ENCODE measurements at regions of chr20 and their contacts with region 1.

Region 1: DNA sequence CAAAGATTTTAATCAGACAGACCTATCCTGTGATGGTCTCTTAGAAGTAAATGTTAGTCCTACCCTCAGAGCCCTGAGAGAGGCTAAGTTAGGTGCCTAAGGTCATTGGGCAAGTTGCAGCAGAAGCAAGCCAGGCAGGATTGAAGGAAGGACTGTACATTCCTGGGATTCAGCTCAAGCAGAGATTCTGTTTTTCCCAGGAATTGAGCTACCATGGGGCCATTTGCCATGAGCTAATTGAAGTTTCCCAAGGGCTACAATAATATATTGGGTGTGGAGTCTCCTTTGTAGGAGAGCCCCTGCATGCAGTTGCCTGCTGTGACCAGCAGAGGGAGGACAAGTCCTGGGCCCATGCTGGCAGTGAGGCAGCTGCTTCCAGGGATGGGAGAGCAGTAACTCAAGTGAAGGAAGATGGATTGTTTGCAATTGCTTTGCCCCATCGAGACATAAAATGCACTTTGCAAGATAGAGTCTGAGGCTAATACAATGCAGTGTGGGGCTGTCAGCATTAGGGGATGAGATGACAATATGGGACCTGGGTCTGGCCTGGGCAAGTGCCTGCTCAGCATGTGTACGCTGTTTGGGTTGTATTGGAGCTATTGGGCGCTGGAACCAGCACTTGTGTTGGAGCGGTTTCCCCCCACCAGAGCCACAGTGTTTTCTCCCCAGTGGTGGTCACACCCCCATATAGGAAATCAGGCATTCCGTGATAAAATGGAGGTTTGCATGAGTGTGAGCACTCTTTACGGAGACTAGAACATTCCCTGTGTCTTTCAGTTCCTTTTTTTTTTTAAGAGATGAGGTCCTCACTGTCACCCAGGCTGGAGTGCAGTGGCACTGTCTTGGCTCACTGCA is 27.9 kb downstream of the DNMT3B start:
- DNase-seq: peak; percentile 78
- ATAC-seq: peak; percentile 81 to 85

Region 2: GRCh38 chr20:32718731-32719348 is 71.3 kb before region 1 on chr20:
- intact Hi-C with region 1: no loop called
- DNase-seq: no peak
- ATAC-seq: no peak

Region 3: DNA sequence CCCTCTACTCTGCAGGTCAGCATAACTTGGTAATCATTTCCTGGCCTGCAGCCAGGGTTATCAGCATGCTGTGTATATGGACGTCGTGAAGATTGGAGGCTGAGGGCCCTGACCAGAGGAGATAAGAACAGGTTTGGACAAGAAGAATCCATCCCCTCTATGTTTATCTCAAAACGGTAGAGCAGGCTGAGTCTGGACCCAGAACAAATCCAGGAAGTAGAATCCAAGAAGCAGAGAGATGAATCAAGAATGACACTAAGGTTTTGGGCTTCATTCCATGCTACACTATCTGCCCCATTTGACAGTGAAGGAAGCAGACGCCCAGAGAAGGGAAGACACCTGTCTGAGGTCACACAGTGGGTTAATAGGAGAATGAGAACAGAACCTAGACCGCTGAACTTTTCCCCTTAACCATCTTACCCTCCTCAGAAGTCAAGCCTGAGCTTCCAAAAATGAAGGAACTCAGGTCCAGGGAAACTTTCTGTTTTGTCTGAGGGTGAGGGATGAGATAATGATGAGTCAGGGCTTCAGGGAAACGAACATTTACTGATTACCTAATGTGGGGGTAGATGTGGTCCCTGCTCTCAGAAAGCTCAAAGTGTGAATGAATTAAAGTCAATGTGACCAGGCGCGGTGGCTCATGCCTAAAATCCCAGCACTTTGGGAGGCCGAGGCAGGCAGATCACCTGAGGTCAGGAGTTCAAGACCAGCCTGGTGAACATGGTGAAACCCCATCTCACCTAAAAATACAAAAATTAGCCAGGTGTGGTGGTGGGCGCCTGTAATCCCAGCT is 37.5 kb before region 1 on chr20:
- intact Hi-C with region 1: no loop called
- DNase-seq: no peak
- ATAC-seq: peak in 1 of 2 donors; percentile 88

Region 4: GRCh38 chr20:32877507-32877906 is 87.4 kb after region 1 on chr20:
- intact Hi-C with region 1: loop called in 1 of 2 experiments (anchors 5 kb)
- DNase-seq: no peak
- ATAC-seq: no peak

Region 5: DNA sequence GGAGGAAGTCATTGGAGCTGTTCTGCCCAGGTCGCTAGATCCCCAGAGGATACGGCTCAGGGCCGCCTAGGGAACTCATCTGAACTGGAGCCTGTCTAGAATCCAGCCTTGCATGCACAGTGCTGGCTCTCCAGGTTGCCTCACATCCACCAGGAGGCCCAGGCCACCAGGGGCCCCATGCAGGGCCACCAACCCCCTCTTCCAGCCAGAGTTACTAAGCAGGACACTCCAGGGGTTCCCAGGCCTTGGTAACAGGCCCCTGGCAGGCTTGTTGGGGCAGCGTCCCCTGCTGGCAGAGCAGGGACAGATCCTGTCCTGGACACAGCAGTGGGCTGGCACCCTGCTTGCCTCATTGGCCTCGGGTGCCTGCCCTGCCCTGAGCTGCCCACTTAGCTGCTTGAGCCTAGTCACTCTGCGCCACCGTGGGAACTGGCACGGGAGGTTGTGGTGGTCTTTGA is 103.9 kb after region 1 on chr20:
- intact Hi-C with region 1: loop called in 1 of 2 experiments (anchors 5 kb)
- DNase-seq: no peak
- ATAC-seq: peak; percentile 39 to 50

Region 6: DNA sequence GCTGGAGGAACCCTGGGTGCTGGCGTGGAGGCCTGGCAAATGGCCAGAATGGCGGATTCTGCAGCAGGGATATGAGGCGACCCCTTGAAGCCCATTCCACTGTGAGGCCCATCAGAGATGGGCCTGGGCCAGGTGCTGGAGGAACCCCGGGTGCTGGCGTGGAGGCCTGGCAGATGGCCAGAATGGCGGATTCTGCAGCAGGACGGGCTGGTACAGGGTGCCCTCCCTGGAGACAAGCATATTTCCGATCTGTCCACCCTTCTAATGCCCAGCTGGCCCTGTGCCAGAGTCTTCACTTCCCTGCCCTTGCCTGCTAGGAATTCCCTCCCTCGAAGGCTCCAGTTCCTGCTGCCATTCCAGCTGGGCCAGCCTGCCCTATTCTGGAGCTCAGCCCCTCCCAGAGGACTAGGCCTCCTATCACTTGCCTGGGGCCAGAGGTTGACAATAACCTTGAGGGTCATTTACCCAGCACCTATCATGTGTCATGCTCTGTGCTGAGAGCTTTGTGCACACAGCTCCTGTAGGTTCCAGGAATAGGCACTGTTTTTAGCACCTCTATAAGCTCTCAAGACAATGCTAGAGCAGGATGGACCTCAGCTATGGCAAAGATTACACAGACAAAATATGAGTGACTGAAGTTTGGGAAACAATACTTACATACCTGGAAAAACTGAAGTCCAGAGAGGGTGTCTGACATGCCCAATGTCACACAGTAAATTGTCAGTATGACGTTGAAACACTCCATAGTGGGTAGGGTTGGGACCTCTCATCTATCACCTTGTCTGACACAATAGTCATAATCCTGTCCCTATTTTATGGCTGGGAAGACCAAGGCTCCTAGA is 192.7 kb after region 1 on chr20:
- intact Hi-C with region 1: no loop called
- DNase-seq: peak; percentile 58
- ATAC-seq: peak; percentile 46 to 71

Region 7: DNA sequence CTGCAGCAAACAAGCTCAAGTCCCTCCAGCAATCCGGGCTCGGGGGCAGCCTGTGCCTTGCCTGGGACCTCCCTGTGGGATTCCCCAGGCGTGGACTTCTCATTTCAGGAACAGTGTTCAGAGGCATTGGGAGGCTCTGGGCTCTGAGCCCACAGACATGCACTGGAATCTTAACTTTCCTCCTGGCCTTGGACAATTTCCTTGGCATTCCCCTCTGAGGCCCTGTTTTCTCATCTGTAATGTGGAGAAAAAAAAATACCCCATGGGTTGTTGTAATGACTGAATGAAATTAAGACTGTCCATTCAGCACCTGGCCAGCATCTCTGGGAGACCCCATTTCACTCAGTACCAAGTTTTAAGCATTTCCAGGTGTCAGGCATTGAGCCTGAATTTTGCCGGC is 306.9 kb after region 1 on chr20:
- intact Hi-C with region 1: loop called (anchors 5 to 10 kb)
- DNase-seq: no peak
- ATAC-seq: peak in 1 of 2 donors; percentile 73

Region 8: GRCh38 chr20:33299111-33299603 is 509.0 kb after region 1 on chr20:
- intact Hi-C with region 1: loop called in 1 of 2 experiments (anchors 10 kb)
- DNase-seq: peak; percentile 62
- ATAC-seq: peak; percentile 74 to 84

Measured in left cardiac atrium (tissue), 4 donors.